B cell (primary cell): ENCODE measurements at regions of chrX and their contacts with region 1.

Region 1: GRCh38 chrX:47144626-47145394 is at the starts of genes NDUFB11 and RBM10:
- DNase-seq: peak; percentile 92
- ATAC-seq: peak; percentile 92
- H3K4me3 ChIP-seq: peak within 1 kb of the TSS; percentile 71 to 83 (median 72)
- H3K4me3 Mint-ChIP-seq: peak within 1 kb of the TSS; percentile 97
- H3K27ac ChIP-seq: peak within 1 kb of the TSS; percentile 94 to 95
- H3K27ac Mint-ChIP-seq: peak within 1 kb of the TSS; percentile 99
- H3K4me1 ChIP-seq: peaks cover 20 to 32% of the 10 kb centered on the region in 2 donors
- H3K4me1 Mint-ChIP-seq: peaks cover 35% of the 10 kb centered on the region
- H3K27me3 ChIP-seq: no peaks in the 10 kb centered on the region
- H3K27me3 Mint-ChIP-seq: no peaks in the 10 kb centered on the region
- CTCF ChIP-seq: peak; percentile 66
- total RNA-seq, gene NDUFB11: 51.0 and 56.8 TPM in 2 replicates
- total RNA-seq, gene RBM10: 51.5 and 51.6 TPM in 2 replicates

Region 2: DNA sequence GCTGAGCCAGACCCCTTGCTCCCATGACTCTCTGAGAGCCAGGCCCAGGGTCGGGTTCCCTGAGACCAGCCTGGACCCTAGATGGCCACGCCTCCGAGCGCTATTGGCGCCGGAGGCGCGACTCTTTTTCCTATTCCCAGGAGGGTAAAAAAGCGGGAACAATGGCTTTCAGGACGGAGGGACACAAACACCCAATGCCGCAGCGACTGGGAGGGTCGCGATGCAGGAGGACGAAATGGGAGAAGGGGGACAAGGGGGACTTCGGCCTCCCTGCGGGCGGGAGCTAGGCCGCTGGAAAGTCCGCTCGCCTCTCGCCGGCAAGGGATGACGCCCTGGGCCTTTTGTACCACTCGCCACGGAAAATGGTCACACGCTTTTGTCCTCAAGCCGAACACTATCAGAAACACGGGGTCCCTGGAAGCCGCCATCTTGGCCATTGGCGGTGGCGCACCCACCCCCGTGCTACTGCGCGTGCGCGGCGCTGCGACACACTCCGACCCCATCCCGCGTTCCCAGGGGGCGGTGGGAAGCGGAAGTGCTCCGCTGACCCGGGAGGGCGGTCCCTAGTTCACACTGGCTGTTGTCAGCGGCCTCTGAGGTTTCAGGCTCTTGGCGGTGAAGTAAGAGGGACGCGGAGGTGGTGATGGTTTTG is 698.0 kb before region 1 on chrX:
- CTCF ChIA-PET with region 1: no interaction called
- POLR2A ChIA-PET with region 1: no interaction called
- intact Hi-C with region 1: loop called (anchors 2 kb)
- DNase-seq: peak; percentile 89
- ATAC-seq: peak; percentile 98
- H3K4me3 ChIP-seq: peak overlapping the region; percentile 17 to 84 (median 79)
- H3K4me3 Mint-ChIP-seq: peak overlapping the region; percentile 87
- H3K27ac ChIP-seq: peak overlapping the region; percentile 76 to 85
- H3K27ac Mint-ChIP-seq: peak overlapping the region; percentile 90
- H3K4me1 ChIP-seq: peaks cover 0 to 15% of the 10 kb centered on the region in 2 donors
- H3K4me1 Mint-ChIP-seq: peaks cover 8% of the 10 kb centered on the region
- H3K27me3 ChIP-seq: no peaks in the 10 kb centered on the region
- H3K27me3 Mint-ChIP-seq: no peaks in the 10 kb centered on the region
- CTCF ChIP-seq: no peak

Region 3: DNA sequence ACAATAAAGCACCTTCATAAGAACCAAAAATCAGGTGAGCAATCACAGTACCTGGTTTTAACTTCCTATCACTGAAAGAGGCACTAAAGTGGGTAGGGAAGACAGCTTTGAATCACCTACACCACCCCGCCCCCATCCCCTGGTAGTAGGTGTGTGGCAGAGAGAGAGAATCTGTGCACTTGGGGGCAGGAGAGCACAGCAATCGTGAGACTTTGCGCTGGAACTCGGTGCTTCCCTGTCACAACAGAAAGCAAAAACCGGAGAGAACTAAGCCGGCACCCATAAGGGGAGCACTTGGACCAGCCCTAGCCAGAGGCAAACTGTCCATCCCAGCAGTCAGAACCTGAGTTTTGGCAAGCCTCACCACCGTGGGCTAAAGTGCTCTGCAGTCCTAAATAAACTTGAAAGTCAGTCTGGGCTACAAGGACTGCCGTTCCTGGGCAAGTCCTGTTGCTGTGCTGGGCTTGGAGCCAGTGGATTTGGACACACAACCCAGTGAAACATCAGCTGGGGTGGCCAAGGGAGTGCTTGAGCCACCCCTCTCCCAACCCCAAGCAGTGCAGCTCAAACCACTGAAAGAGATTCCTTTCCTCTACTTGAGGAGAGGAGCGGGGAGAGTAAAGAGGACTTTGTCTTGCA is 32.4 kb before region 1 on chrX:
- CTCF ChIA-PET with region 1: no interaction called
- POLR2A ChIA-PET with region 1: no interaction called
- intact Hi-C with region 1: no loop called
- DNase-seq: no peak
- ATAC-seq: no peak
- H3K4me3 ChIP-seq: no peak overlapping the region
- H3K4me3 Mint-ChIP-seq: no peak overlapping the region
- H3K27ac ChIP-seq: no peak overlapping the region
- H3K27ac Mint-ChIP-seq: no peak overlapping the region
- H3K4me1 ChIP-seq: no peaks in the 10 kb centered on the region
- H3K4me1 Mint-ChIP-seq: no peaks in the 10 kb centered on the region
- H3K27me3 ChIP-seq: no peaks in the 10 kb centered on the region
- H3K27me3 Mint-ChIP-seq: no peaks in the 10 kb centered on the region
- CTCF ChIP-seq: no peak

Region 4: DNA sequence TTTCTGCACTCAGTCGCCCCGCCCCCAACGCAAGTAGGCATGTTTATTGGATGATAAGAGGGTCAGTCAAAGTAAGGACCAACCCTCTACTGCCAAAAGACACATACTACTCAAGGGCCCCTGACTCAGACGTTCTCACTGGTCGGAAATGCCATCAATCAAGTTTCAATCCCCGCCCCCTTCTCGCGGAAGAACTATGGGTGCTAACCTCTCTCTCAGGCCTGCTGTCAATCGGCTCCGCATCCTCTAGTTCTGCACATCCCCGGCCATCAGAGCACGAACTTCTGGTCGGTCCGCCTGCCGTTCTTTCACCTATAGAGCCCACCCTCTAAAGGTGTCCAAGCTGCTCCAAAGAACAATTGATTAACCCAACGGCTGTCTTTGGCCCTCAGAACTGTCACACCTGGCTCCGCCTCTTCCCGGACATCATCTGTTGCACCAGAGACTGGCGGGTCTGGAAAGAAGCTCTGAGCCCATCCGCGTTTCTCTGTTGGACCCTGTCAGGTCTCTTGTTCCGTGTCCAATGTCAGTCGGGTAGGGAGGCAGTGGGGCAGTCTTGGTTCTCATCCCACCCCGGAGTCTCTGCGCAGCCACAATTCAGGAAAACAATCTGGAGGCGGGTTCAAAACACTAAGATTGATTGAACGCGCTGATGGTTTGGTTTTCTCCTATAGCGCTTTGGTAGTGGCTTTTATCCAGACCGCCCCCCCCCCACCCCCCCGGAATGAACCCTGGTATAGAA is 15.5 kb before region 1 on chrX:
- CTCF ChIA-PET with region 1: interaction called, 8 read pairs
- POLR2A ChIA-PET with region 1: interaction called, 21 read pairs
- intact Hi-C with region 1: loop called (anchors 1 kb)
- DNase-seq: peak; percentile 94
- ATAC-seq: peak; percentile 98
- H3K4me3 ChIP-seq: peak overlapping the region; percentile 32 to 71 (median 68)
- H3K4me3 Mint-ChIP-seq: peak overlapping the region; percentile 97
- H3K27ac ChIP-seq: peak overlapping the region; percentile 47
- H3K27ac Mint-ChIP-seq: peak overlapping the region; percentile 93
- H3K4me1 ChIP-seq: peaks cover 0 to 6% of the 10 kb centered on the region in 2 donors
- H3K4me1 Mint-ChIP-seq: peaks cover 3% of the 10 kb centered on the region
- H3K27me3 ChIP-seq: no peaks in the 10 kb centered on the region
- H3K27me3 Mint-ChIP-seq: no peaks in the 10 kb centered on the region
- CTCF ChIP-seq: no peak

Region 5: GRCh38 chrX:47200385-47201150 is 55.8 kb after region 1 on chrX:
- CTCF ChIA-PET with region 1: no interaction called
- POLR2A ChIA-PET with region 1: no interaction called
- intact Hi-C with region 1: no loop called
- DNase-seq: no peak
- ATAC-seq: no peak
- H3K4me3 ChIP-seq: no peak overlapping the region
- H3K4me3 Mint-ChIP-seq: no peak overlapping the region
- H3K27ac ChIP-seq: no peak overlapping the region
- H3K27ac Mint-ChIP-seq: no peak overlapping the region
- H3K4me1 ChIP-seq: peaks cover 20 to 22% of the 10 kb centered on the region in 2 donors
- H3K4me1 Mint-ChIP-seq: peaks cover 26% of the 10 kb centered on the region
- H3K27me3 ChIP-seq: no peaks in the 10 kb centered on the region
- H3K27me3 Mint-ChIP-seq: no peaks in the 10 kb centered on the region
- CTCF ChIP-seq: no peak

Region 6: DNA sequence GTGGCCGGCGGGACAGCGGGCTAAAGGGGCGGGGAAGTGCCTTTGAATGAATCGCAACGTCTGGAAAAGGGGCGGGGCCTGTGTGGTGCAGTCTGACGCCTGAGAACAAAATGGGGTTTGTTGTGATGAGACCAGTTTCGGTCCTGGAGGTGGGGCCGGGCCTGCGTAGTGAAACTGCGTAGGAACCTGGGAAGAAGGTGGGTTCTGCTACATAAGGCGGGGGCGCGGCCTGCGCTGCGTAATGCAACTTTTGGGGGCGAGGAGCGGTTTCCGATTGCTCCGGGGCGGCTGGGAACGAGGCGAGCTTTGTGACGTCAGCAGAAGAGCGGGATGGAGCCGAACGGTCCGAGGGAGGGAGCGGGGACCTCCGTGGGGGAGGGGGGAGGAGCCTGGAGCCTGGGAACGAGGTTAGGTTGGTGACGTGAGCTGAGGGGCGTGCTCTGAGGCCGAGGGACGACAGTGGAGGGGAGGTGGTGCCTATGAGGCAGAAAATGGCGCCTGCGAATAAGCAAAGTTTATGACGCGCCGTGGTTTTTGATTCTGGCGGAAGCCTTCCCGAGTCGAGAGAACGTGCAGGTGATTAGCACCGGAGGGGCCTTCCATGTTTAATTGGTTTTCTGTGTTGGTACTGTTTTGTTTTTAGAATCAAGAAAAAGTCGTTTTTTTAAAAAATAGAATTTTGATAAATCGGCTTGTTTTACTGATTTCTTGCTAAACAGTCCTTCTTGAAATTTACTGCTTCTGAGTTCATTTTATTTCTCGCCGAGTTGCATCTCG is 88.7 kb after region 1 on chrX:
- CTCF ChIA-PET with region 1: no interaction called
- POLR2A ChIA-PET with region 1: interaction called, 10 read pairs
- intact Hi-C with region 1: loop called (anchors 5 kb)
- DNase-seq: peak; percentile 96
- ATAC-seq: peak; percentile 88
- H3K4me3 ChIP-seq: peak overlapping the region; percentile 67 to 82 (median 75)
- H3K4me3 Mint-ChIP-seq: peak overlapping the region; percentile 94
- H3K27ac ChIP-seq: peak overlapping the region; percentile 96 to 99
- H3K27ac Mint-ChIP-seq: peak overlapping the region; percentile 99
- H3K4me1 ChIP-seq: peaks cover 0 to 8% of the 10 kb centered on the region in 2 donors
- H3K4me1 Mint-ChIP-seq: peaks cover 21% of the 10 kb centered on the region
- H3K27me3 ChIP-seq: no peaks in the 10 kb centered on the region
- H3K27me3 Mint-ChIP-seq: no peaks in the 10 kb centered on the region
- CTCF ChIP-seq: no peak